ENCODE measurements at regions of chr11 and their contacts with region 1.

Region 1: GRCh38 chr11:17504330-17505107 is 27.9 kb upstream of the ABCC8 start:
- DNase-seq: peak; percentile 91
- H3K4me3 ChIP-seq: no peak overlapping the region
- H3K27ac ChIP-seq: peak overlapping the region in 2 of 4 donors; percentile 42 to 52
- H3K4me1 ChIP-seq: peaks cover 0 to 21% (median 16%) of the 10 kb centered on the region in 4 donors
- H3K27me3 ChIP-seq: no peaks in the 10 kb centered on the region
- CTCF ChIP-seq: peak; percentile 68 to 87 (median 76)
- EP300 ChIP-seq: peak in 1 of 4 donors; percentile 74
- POLR2A ChIP-seq: no peak

Region 2: GRCh38 chr11:17230867-17231851 is 273.4 kb before region 1 on chr11:
- intact Hi-C with region 1: loop called (anchors 10 kb)
- DNase-seq: no peak
- H3K4me3 ChIP-seq: no peak overlapping the region
- H3K27ac ChIP-seq: no peak overlapping the region
- H3K4me1 ChIP-seq: peaks cover 0 to 5% (median 0%) of the 10 kb centered on the region in 4 donors
- H3K27me3 ChIP-seq: no peaks in the 10 kb centered on the region
- CTCF ChIP-seq: no peak
- EP300 ChIP-seq: no peak
- POLR2A ChIP-seq: no peak

Region 3: DNA sequence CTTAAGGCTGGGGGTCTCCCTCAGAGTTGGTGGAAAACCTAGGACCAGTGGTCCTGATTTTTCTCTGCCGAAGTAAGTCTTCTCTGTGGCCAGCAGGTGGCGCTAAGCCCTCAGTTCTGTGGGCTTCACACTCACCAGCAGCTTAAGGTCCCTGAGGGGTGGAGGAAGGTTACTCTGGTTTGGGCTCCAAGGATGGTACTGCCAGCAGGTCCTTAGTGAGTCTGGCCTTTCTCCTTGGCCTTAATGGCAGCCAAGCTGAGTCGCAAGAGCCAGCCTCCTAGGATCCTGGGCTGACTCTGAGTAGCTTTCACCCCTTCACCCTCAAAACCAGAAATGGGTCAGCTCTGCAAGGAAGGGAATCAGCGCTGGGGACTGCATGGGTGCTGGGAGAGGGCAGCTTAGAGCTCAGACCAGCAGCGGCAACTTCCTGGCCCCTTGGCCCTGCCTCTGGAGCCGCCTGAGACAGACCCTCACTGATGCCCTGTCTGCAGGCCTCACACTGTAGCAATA is 120.5 kb before region 1 on chr11:
- intact Hi-C with region 1: loop called (anchors 1 kb)
- DNase-seq: peak; percentile 88
- H3K4me3 ChIP-seq: no peak overlapping the region
- H3K27ac ChIP-seq: no peak overlapping the region
- H3K4me1 ChIP-seq: peaks cover 0 to 13% (median 5%) of the 10 kb centered on the region in 4 donors
- H3K27me3 ChIP-seq: no peaks in the 10 kb centered on the region
- CTCF ChIP-seq: peak; percentile 47 to 88 (median 84)
- EP300 ChIP-seq: no peak
- POLR2A ChIP-seq: no peak